Activated naive CD4-positive, alpha-beta T cell treated with anti-CD3 and anti-CD28 coated beads, Interleukin-2, amount 10 ng/mL, durations not matched to agents 7 days and 5 days (primary cell): ENCODE measurements at regions of chr4 and their contacts with region 1.

Region 1: DNA sequence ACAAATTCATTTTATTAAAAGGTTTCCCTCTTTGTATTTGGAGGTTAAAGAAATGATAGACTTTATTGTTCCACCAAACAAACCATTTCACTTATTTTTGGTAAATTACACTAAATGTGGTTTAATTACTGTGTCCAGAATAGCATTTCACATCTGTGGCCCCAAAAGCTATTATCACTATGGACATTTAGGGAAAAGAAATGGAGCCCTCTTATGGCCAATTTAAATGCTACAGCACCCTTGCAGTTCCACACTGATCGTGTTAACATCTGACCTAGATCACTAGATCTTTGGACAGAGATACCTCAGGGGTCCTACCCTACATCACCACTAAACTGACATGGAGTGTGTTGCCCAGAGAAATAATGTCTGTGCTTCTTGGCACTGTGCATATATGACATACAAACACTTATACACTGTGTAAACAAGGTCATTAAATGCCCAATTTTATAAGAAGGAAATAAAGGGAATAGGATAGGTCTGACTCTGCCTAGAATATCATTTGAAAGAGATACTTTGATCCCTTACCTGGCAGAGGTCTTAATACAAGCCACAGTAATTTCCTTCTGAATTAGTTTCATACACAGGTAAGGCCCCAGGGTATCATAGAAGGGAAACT is 163.9 kb downstream of the KDR start:
- DNase-seq: no peak
- H3K4me3 Mint-ChIP-seq: no peak overlapping the region
- H3K27ac Mint-ChIP-seq: no peak overlapping the region
- H3K4me1 Mint-ChIP-seq: peaks cover 21% of the 10 kb centered on the region
- H3K27me3 Mint-ChIP-seq: no peaks in the 10 kb centered on the region

Region 2: DNA sequence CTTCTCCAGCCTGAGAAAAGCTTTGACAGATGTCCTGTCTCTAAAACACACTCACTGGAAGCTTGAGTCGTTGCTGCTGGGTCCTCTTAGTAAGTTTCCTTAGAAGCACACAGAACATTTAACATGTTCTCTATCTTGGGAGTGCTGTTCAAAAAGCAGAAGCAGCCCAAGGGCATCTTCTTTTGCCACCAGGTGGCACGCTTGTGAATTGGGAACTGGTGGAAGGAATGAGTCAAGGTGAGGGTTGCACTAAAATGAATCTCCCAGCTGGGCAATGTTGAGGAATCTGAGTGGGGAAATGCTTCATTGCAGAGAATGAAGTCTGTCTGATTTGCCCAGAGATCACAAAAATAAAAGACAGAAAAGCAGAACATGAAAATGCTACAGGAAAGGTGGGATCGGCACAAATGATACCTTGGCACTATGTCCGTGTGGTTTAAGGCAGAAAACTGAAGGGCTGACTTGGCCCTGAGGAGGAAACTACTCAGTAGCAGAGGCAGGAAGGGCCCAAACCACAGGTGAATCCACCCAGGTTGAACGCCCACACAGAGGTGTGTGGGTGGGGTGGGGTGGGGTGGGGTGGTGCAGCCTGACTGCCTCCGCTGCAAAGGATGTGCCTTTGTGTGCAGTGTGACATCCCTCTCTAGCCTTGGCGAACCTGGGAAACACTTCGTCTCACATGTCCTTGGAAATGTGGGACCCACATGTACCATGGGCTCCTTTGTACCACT is 277.7 kb before region 1 on chr4:
- CTCF ChIA-PET with region 1: interaction called, 59 read pairs
- DNase-seq: peak; percentile 72
- H3K4me3 Mint-ChIP-seq: no peak overlapping the region
- H3K27ac Mint-ChIP-seq: peak overlapping the region; percentile 3
- H3K4me1 Mint-ChIP-seq: peaks cover 27% of the 10 kb centered on the region
- H3K27me3 Mint-ChIP-seq: no peaks in the 10 kb centered on the region